GM12878 (cell line): ENCODE measurements at regions of chr10 and their contacts with region 1.

Region 1: GRCh38 chr10:56116684-56117083 is 244.4 kb downstream of the ZWINT start:
- DNase-seq: no peak
- ATAC-seq: peak; percentile 49; the same call in 1 of the 3 replicates
- H3K4me3 ChIP-seq: no peak overlapping the region
- H3K27ac ChIP-seq: no peak overlapping the region
- H3K4me1 ChIP-seq: no peaks in the 10 kb centered on the region
- H3K27me3 ChIP-seq: no peaks in the 10 kb centered on the region
- CTCF ChIP-seq: peak in 2 of 3 experiments; percentile 10 to 19; a peak in 1 of 6 replicates
- EP300 ChIP-seq: no peak
- POLR2A ChIP-seq: no peak
- RAD21 ChIP-seq: no peak

Region 2: GRCh38 chr10:56104487-56104886 is 12.2 kb before region 1 on chr10:
- CTCF ChIA-PET with region 1: interaction called, 10 read pairs
- POLR2A ChIA-PET with region 1: no interaction called
- RAD21 ChIA-PET with region 1: no interaction called
- SMC1A ChIA-PET with region 1: interaction called, 3 read pairs
- in situ Hi-C with region 1: no loop called
- intact Hi-C with region 1: no loop called
- DNase-seq: no peak
- ATAC-seq: no peak
- H3K4me3 ChIP-seq: no peak overlapping the region
- H3K27ac ChIP-seq: no peak overlapping the region
- H3K4me1 ChIP-seq: no peaks in the 10 kb centered on the region
- H3K27me3 ChIP-seq: no peaks in the 10 kb centered on the region
- CTCF ChIP-seq: no peak
- EP300 ChIP-seq: no peak
- POLR2A ChIP-seq: no peak
- RAD21 ChIP-seq: no peak